Ascending aorta (tissue), 2 donors: ENCODE measurements at regions of chr10 and their contacts with region 1.

Region 1: DNA sequence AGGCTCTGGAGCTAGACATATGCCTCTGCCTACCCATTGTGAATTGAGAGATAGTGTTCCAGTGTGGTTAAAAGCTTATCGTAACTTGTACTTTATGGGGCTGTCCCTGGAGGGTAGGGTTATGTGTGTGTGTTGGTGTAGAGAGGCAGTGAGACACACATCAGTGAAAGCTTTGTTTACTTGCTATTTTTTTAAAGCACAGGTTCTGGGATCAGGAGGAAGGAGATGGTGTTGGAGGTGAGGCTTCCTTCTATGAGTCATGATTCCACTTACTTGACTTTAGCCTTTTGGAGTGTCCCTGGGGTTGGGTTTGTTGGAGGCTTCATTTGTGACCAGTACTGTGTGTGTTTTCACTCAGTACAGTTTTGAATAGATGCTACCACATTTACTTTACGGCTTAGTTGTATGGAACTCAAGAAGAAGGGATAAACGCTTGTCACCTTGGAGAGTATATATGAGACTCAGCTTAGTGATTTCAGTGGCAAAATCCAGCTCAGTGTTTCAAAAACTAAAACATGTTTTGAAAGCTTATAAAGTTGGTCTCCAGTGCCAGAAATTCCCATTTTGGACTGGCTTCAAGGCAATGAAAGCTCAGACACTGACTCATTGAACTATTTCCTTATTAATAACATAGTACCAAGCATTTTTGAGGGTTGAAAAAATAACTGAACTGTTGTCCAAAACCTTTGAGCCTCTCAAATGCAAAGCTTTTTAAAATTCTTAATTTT is 106.2 kb downstream of the PLXDC2 start:
- DNase-seq: peak in 1 of 2 donors; percentile 82
- H3K4me3 ChIP-seq: peak overlapping the region; percentile 18 to 35
- H3K27ac ChIP-seq: peak overlapping the region; percentile 90 to 94
- H3K4me1 ChIP-seq: peaks cover 7 to 65% of the 10 kb centered on the region in 2 donors
- H3K27me3 ChIP-seq: no peaks in the 10 kb centered on the region
- CTCF ChIP-seq: no peak

Region 2: DNA sequence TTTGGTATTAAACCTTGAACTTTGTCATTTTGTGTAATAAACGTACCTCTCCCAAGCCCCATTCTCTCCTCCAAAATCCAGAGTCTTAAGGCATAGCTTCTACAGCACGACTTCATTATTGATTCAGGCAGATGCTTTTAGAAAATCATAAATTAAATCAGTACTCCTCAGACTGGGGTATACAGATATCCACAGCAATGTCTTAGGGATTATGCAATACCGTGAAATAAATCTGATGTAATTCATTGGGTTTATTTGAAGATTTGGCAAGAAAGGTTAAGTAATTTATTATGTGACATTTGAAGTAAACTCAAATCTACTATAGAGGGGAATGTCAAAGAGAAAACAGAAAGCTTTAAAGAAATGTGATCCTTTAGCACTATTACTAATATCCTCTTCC is 352.3 kb before region 1 on chr10:
- intact Hi-C with region 1: loop called (anchors 5 kb)
- DNase-seq: no peak
- H3K4me3 ChIP-seq: no peak overlapping the region
- H3K27ac ChIP-seq: no peak overlapping the region
- H3K4me1 ChIP-seq: peaks cover 0 to 11% of the 10 kb centered on the region in 2 donors
- H3K27me3 ChIP-seq: no peaks in the 10 kb centered on the region
- CTCF ChIP-seq: no peak

Region 3: DNA sequence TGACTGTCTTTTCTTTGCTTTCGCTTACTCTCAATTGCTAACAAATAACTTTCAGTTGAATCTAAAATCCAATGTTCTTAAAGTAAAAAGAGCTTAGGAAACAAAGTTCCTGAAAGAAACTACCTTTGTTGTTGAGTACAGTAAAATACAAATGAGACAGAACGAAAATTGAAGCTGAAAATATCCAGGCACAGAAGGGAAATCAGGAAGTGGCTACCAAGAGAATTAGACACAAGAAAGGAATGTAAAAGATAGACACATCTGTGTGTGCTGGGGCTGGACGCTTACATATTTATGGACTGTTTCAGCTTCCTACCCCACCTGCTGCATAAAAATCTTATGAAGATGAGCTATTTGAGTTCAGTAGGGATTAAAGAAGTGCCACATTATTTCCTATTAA is 267.8 kb before region 1 on chr10:
- intact Hi-C with region 1: loop called (anchors 10 kb)
- DNase-seq: no peak
- H3K4me3 ChIP-seq: no peak overlapping the region
- H3K27ac ChIP-seq: peak overlapping the region in 1 of 2 donors; percentile 21
- H3K4me1 ChIP-seq: peaks cover 0 to 28% of the 10 kb centered on the region in 2 donors
- H3K27me3 ChIP-seq: no peaks in the 10 kb centered on the region
- CTCF ChIP-seq: no peak

Region 4: GRCh38 chr10:20004087-20004523 is 81.7 kb after region 1 on chr10:
- intact Hi-C with region 1: loop called (anchors 5 kb)
- DNase-seq: peak; percentile 28 to 74
- H3K4me3 ChIP-seq: peak overlapping the region in 1 of 2 donors; percentile 40
- H3K27ac ChIP-seq: peak overlapping the region; percentile 80 to 83
- H3K4me1 ChIP-seq: peaks cover 24 to 63% of the 10 kb centered on the region in 2 donors
- H3K27me3 ChIP-seq: no peaks in the 10 kb centered on the region
- CTCF ChIP-seq: no peak

Region 5: DNA sequence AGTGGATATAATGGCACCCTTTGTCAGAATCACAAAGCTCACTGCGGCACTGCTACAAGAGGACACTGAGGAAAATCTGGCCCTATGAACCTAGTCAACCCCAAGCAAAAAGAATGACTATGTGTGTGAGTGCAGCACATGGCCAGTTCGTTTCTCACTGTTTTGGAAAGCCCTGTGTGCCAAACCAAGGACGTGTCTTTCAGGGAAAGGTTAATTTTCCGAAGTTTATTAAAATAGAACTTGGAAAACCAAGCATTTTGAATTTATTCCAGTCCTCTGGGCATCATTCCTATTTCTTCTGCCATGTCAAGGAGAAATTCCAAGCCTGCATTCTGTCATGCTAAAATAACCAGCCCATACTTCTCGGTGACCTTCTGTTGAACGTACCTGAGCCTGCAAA is 365.7 kb after region 1 on chr10:
- intact Hi-C with region 1: no loop called
- DNase-seq: no peak
- H3K4me3 ChIP-seq: no peak overlapping the region
- H3K27ac ChIP-seq: no peak overlapping the region
- H3K4me1 ChIP-seq: peaks cover 0 to 8% of the 10 kb centered on the region in 2 donors
- H3K27me3 ChIP-seq: no peaks in the 10 kb centered on the region
- CTCF ChIP-seq: no peak